Caco-2 (cell line): ENCODE measurements at regions of chr17 and their contacts with region 1.

Region 1: DNA sequence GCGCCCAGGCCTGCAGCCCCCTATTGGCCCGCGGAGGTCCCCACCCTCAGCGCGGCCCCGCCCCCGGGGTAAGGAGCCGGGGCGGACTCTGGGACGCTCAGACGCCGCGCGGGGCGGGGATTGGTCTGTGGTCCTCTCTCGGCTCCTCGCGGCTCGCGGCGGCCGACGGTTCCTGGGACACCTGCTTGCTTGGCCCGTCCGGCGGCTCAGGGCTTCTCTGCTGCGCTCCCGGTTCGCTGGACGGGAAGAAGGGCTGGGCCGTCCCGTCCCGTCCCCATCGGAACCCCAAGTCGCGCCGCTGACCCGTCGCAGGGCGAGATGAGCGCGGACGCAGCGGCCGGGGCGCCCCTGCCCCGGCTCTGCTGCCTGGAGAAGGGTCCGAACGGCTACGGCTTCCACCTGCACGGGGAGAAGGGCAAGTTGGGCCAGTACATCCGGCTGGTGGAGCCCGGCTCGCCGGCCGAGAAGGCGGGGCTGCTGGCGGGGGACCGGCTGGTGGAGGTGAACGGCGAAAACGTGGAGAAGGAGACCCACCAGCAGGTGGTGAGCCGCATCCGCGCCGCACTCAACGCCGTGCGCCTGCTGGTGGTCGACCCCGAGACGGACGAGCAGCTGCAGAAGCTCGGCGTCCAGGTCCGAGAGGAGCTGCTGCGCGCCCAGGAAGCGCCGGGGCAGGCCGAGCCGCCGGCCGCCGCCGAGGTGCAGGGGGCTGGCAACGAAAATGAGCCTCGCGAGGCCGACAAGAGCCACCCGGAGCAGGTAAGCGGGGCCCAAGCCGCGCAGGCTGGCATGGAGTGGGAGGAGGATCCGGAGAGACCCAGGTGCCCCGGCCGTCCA is at the start of gene NHERF1:
- DNase-seq: peak; percentile 93 to 99
- H3K4me3 ChIP-seq: peak within 1 kb of the TSS; percentile 99
- H3K4me3 Mint-ChIP-seq: peak within 1 kb of the TSS; percentile 98
- H3K27ac Mint-ChIP-seq: peak within 1 kb of the TSS; percentile 87
- H3K4me1 ChIP-seq: peaks cover 65% of the 10 kb centered on the region
- H3K4me1 Mint-ChIP-seq: peaks cover 55% of the 10 kb centered on the region
- H3K27me3 ChIP-seq: no peaks in the 10 kb centered on the region
- H3K27me3 Mint-ChIP-seq: no peaks in the 10 kb centered on the region
- CTCF ChIP-seq: peak in 1 of 2 experiments; percentile 55
- total RNA-seq, gene NHERF1: 204 and 218 TPM in 2 replicates

Region 2: GRCh38 chr17:74659898-74660297 is 88.8 kb before region 1 on chr17:
- CTCF ChIA-PET with region 1: interaction called, 31 read pairs
- POLR2A ChIA-PET with region 1: interaction called, 7 read pairs
- intact Hi-C with region 1: loop called (anchors 2 kb)
- DNase-seq: no peak
- H3K4me3 ChIP-seq: no peak overlapping the region
- H3K4me3 Mint-ChIP-seq: no peak overlapping the region
- H3K27ac Mint-ChIP-seq: no peak overlapping the region
- H3K4me1 ChIP-seq: peaks cover 7% of the 10 kb centered on the region; the same call in 1 of the 2 replicates
- H3K4me1 Mint-ChIP-seq: no peaks in the 10 kb centered on the region
- H3K27me3 ChIP-seq: no peaks in the 10 kb centered on the region; the same call in 1 of the 2 replicates
- H3K27me3 Mint-ChIP-seq: no peaks in the 10 kb centered on the region
- CTCF ChIP-seq: no peak

Region 3: GRCh38 chr17:74725111-74725510 is 23.6 kb before region 1 on chr17:
- CTCF ChIA-PET with region 1: no interaction called
- POLR2A ChIA-PET with region 1: no interaction called
- intact Hi-C with region 1: no loop called
- DNase-seq: no peak
- H3K4me3 ChIP-seq: no peak overlapping the region
- H3K4me3 Mint-ChIP-seq: no peak overlapping the region
- H3K27ac Mint-ChIP-seq: no peak overlapping the region
- H3K4me1 ChIP-seq: peaks cover under 1% of the 10 kb centered on the region; the same call in 1 of the 2 replicates
- H3K4me1 Mint-ChIP-seq: peaks cover 6% of the 10 kb centered on the region
- H3K27me3 ChIP-seq: no peaks in the 10 kb centered on the region
- H3K27me3 Mint-ChIP-seq: no peaks in the 10 kb centered on the region
- CTCF ChIP-seq: no peak

Region 4: GRCh38 chr17:74736513-74737298 is 12.0 kb before region 1 on chr17 and contains the start of gene RAB37:
- CTCF ChIA-PET with region 1: interaction called, 43 read pairs
- POLR2A ChIA-PET with region 1: interaction called, 8 read pairs
- intact Hi-C with region 1: no loop called
- DNase-seq: peak; percentile 93 to 97
- H3K4me3 ChIP-seq: peak within 1 kb of the TSS; percentile 91
- H3K4me3 Mint-ChIP-seq: peak within 1 kb of the TSS; percentile 76
- H3K27ac Mint-ChIP-seq: peak within 1 kb of the TSS; percentile 71
- H3K4me1 ChIP-seq: peaks cover 24% of the 10 kb centered on the region
- H3K4me1 Mint-ChIP-seq: peaks cover 6% of the 10 kb centered on the region
- H3K27me3 ChIP-seq: no peaks in the 10 kb centered on the region
- H3K27me3 Mint-ChIP-seq: no peaks in the 10 kb centered on the region
- CTCF ChIP-seq: peak; percentile 56 to 66
- total RNA-seq, gene RAB37: 12.3 and 14.8 TPM in 2 replicates

Region 5: GRCh38 chr17:74770498-74771318 is 22.0 kb after region 1 on chr17:
- CTCF ChIA-PET with region 1: interaction called, 76 read pairs
- POLR2A ChIA-PET with region 1: interaction called, 17 read pairs
- intact Hi-C with region 1: loop called (anchors 1 kb)
- DNase-seq: peak; percentile 84 to 89
- H3K4me3 ChIP-seq: no peak overlapping the region
- H3K4me3 Mint-ChIP-seq: peak overlapping the region; percentile 24
- H3K27ac Mint-ChIP-seq: peak overlapping the region; percentile 83
- H3K4me1 ChIP-seq: peaks cover 51% of the 10 kb centered on the region
- H3K4me1 Mint-ChIP-seq: peaks cover 51% of the 10 kb centered on the region
- H3K27me3 ChIP-seq: no peaks in the 10 kb centered on the region
- H3K27me3 Mint-ChIP-seq: no peaks in the 10 kb centered on the region
- CTCF ChIP-seq: peak; percentile 86 to 97

Region 6: GRCh38 chr17:74842599-74843351 is 94.0 kb after region 1 on chr17:
- CTCF ChIA-PET with region 1: interaction called, 3 read pairs
- POLR2A ChIA-PET with region 1: interaction called, 13 read pairs
- intact Hi-C with region 1: no loop called
- DNase-seq: peak in 1 of 2 experiments; percentile 81
- H3K4me3 ChIP-seq: peak overlapping the region; percentile 35
- H3K4me3 Mint-ChIP-seq: peak overlapping the region; percentile 39
- H3K27ac Mint-ChIP-seq: no peak overlapping the region
- H3K4me1 ChIP-seq: no peaks in the 10 kb centered on the region
- H3K4me1 Mint-ChIP-seq: no peaks in the 10 kb centered on the region
- H3K27me3 ChIP-seq: no peaks in the 10 kb centered on the region
- H3K27me3 Mint-ChIP-seq: no peaks in the 10 kb centered on the region
- CTCF ChIP-seq: peak; percentile 62 to 69

Region 7: DNA sequence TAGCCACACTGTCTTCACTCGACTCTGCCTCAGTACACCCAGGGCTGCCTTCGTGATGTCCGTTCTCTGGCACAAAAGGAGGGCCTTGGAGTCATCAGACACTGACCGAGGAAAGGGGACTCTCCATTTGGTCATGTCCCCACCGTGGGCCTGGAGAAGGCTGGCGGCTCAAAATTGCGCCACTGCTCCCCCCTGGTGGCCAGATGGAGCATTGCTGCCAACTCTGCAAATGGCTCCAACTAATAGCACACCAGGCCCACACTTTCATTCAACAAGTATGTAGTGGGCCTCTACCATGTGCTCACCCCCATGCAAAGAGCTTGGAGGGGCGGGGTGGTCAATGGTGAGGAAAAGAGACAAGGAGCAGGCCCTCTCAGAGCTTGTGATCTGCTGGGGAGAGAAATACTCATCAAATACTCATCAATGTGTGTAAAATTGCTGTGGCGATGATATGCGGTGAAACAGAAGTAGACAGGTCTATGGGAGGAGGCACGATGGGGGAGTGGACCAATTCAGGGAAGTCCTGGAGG is 116.2 kb after region 1 on chr17:
- CTCF ChIA-PET with region 1: interaction called, 13 read pairs
- POLR2A ChIA-PET with region 1: no interaction called
- intact Hi-C with region 1: loop called (anchors 2 kb)
- DNase-seq: peak; percentile 64 to 81
- H3K4me3 ChIP-seq: no peak overlapping the region
- H3K4me3 Mint-ChIP-seq: no peak overlapping the region
- H3K27ac Mint-ChIP-seq: no peak overlapping the region
- H3K4me1 ChIP-seq: peaks cover 31% of the 10 kb centered on the region
- H3K4me1 Mint-ChIP-seq: peaks cover 8% of the 10 kb centered on the region
- H3K27me3 ChIP-seq: peaks cover 6% of the 10 kb centered on the region
- H3K27me3 Mint-ChIP-seq: peaks cover 6% of the 10 kb centered on the region
- CTCF ChIP-seq: peak; percentile 93 to 97

Region 8: DNA sequence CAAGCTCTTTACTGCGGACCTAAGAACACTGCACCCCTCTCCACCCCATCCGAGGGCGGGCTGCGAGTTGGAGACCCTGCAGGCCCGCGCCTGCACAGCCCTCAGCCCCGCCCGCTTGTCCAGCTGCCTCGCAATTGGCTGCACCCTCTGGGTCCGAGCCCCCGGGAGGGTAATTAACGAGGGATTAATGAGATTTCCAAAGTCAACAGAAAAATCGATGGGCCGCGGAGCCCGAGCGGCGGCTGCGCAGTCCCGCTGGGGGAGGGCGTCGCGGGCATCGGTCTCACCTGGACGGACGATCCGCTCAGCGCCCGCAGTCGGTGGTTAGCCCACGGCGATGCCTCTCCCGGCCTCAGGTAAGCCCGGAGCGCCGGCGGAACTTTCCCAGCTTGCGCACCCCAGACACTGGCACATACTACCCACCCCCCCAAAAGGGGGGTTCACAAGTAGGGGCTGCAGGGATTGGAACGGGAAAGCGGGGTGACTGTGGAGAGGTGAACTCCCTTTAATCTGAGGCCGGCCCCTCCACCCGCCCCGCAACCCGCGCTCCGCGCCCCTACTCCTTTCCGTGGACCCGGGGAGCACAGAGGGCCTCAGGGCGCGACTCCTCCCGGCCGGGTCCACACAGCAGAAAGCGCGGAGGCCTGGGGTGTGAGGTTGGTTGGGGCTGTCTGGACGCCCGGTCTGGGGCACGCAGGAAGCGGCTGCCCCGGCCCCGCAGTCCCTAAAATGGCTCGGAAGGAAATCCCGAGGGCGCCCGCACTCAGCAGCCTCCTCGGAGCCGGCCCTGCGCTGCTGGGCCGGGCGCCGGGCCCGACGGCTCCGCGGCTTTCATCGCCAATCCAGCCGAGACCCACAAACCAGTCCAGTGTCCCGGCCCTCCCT is 187.1 kb after region 1 on chr17 and contains the start of gene OTOP3:
- CTCF ChIA-PET with region 1: no interaction called
- POLR2A ChIA-PET with region 1: interaction called, 13 read pairs
- intact Hi-C with region 1: no loop called
- DNase-seq: no peak
- H3K4me3 ChIP-seq: no peak within 1 kb of the TSS
- H3K4me3 Mint-ChIP-seq: no peak within 1 kb of the TSS
- H3K27ac Mint-ChIP-seq: no peak within 1 kb of the TSS
- H3K4me1 ChIP-seq: no peaks in the 10 kb centered on the region
- H3K4me1 Mint-ChIP-seq: peaks cover 12% of the 10 kb centered on the region
- H3K27me3 ChIP-seq: no peaks in the 10 kb centered on the region; the same call in 1 of the 2 replicates
- H3K27me3 Mint-ChIP-seq: peaks cover 16% of the 10 kb centered on the region
- CTCF ChIP-seq: no peak
- total RNA-seq, gene OTOP3: not detected in 2 replicates